ENCODE measurements at regions of chr9 and their contacts with region 1.

Region 1: GRCh38 chr9:19925817-19926503 is 137.1 kb upstream of the SLC24A2 start:
- DNase-seq: peak; percentile 69
- H3K4me3 ChIP-seq: peak overlapping the region in 3 of 4 donors; percentile 10 to 42 (median 29)
- H3K27ac ChIP-seq: no peak overlapping the region
- H3K4me1 ChIP-seq: peaks cover 0 to 10% (median 3%) of the 10 kb centered on the region in 4 donors
- H3K27me3 ChIP-seq: peaks cover 6% of the 10 kb centered on the region
- CTCF ChIP-seq: peak; percentile 94 to 98 (median 95)
- EP300 ChIP-seq: no peak
- POLR2A ChIP-seq: no peak

Region 2: GRCh38 chr9:19720377-19720776 is 205.6 kb before region 1 on chr9:
- in situ Hi-C with region 1: no loop called
- intact Hi-C with region 1: no loop called
- DNase-seq: no peak
- H3K4me3 ChIP-seq: no peak overlapping the region
- H3K27ac ChIP-seq: no peak overlapping the region
- H3K4me1 ChIP-seq: no peaks in the 10 kb centered on the region
- H3K27me3 ChIP-seq: no peaks in the 10 kb centered on the region
- CTCF ChIP-seq: no peak
- EP300 ChIP-seq: no peak
- POLR2A ChIP-seq: no peak

Region 3: DNA sequence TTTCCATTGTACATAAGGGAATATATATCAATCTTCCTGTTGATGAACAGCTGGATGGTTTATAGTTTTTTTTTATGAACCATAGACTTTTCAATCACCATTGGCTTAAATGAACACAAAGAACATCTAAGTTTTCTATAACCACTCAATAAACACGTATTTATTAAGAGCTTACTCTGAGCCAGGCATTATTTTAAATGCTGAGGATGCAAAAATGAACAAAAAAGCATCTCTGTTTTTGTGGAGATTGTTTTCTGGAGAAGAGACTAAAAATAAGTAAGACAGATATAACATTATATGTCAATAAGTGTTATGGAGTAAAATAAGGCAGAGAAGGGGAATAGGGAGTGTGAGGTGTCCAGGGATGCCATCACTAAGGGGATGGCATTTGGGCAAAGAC is 85.0 kb before region 1 on chr9:
- in situ Hi-C with region 1: no loop called
- intact Hi-C with region 1: no loop called
- DNase-seq: no peak
- H3K4me3 ChIP-seq: no peak overlapping the region
- H3K27ac ChIP-seq: no peak overlapping the region
- H3K4me1 ChIP-seq: no peaks in the 10 kb centered on the region
- H3K27me3 ChIP-seq: no peaks in the 10 kb centered on the region
- CTCF ChIP-seq: no peak
- EP300 ChIP-seq: no peak
- POLR2A ChIP-seq: no peak

Region 4: GRCh38 chr9:19999491-20000057 is 73.6 kb after region 1 on chr9:
- in situ Hi-C with region 1: loop called in 1 of 4 experiments (anchors 25 kb)
- intact Hi-C with region 1: no loop called
- DNase-seq: no peak
- H3K4me3 ChIP-seq: no peak overlapping the region
- H3K27ac ChIP-seq: no peak overlapping the region
- H3K4me1 ChIP-seq: no peaks in the 10 kb centered on the region
- H3K27me3 ChIP-seq: no peaks in the 10 kb centered on the region
- CTCF ChIP-seq: no peak
- EP300 ChIP-seq: no peak
- POLR2A ChIP-seq: no peak

Region 5: DNA sequence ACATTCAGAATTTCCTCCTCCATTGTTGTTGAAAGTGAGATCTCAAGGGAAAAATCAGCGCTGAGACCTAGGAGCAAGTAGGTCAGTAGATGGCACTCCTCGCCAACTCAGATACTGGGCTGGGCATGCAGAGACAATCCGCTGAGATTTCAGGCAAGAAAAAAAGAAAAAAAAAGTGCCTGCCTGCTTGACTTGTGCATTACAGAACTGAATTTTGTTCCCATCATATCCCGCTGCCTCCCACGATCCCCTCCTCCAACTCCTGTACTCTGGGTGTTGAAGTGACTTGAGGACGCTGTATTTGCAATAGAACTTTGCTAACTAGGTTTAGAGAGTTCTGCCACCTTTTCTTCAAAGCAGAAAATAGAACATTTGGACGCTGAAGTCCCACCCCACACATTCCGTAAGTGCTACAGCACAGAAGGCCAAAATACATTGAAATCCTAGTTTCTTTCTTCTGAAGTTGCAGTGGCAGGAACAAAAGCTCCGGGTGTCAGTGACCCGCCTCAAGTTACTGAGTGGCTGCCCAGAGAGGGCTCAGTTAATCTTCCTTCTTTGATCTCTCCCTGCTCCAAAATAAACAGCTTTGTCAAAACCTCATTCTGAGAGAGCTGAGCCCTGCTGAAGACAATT is 430.6 kb after region 1 on chr9:
- in situ Hi-C with region 1: no loop called
- intact Hi-C with region 1: no loop called
- DNase-seq: peak; percentile 74
- H3K4me3 ChIP-seq: peak overlapping the region in 1 of 4 donors; percentile 23
- H3K27ac ChIP-seq: peak overlapping the region; percentile 45 to 68 (median 64)
- H3K4me1 ChIP-seq: peaks cover 0 to 22% (median 16%) of the 10 kb centered on the region in 4 donors
- H3K27me3 ChIP-seq: no peaks in the 10 kb centered on the region
- CTCF ChIP-seq: peak; percentile 55 to 72 (median 67)
- EP300 ChIP-seq: no peak
- POLR2A ChIP-seq: no peak

Region 6: DNA sequence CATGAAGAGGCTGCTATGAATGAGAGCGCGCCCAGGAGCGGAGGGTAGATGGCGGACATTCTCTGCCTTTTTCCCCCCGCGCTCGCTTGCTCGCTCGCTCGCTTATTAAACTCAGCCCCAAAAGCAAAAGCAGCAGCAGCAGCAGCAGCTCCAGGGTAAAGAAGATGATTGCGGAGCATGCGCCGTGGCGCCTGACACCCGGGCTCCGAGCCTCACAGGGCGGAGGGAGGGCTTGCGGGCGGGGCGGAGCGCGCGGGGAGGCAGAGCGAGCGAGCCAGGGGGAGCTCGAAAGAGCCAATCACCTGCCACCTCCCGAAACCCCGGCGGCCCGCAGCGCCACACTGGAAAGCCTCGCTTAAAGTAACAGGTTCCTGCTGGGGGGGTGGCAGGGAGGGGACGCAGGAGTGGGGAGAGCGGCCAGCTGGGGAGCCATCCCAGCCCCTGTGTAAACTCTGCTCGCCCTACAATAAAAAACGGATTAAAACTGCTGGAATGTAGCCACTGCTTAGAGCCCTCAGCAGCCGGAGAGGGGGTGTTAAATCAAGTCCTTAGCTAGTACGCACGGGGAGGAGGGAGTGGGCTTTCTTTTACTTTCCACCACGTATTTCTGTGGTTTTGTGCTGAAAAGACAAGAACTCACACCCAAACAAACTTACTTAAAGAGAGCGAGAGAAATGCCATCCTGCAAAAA is 696.5 kb after region 1 on chr9 and contains the start of gene MLLT3:
- in situ Hi-C with region 1: loop called in 1 of 4 experiments (anchors 25 kb)
- intact Hi-C with region 1: loop called (anchors 10 kb)
- DNase-seq: peak; percentile 97
- H3K4me3 ChIP-seq: peak within 1 kb of the TSS; percentile 74 to 94 (median 85)
- H3K27ac ChIP-seq: peak within 1 kb of the TSS; percentile 90 to 98 (median 94)
- H3K4me1 ChIP-seq: peaks cover 9 to 42% (median 25%) of the 10 kb centered on the region in 4 donors
- H3K27me3 ChIP-seq: no peaks in the 10 kb centered on the region
- CTCF ChIP-seq: peak in 2 of 5 experiments; percentile 7 to 11
- EP300 ChIP-seq: no peak
- POLR2A ChIP-seq: peak; percentile 75
- total RNA-seq, gene MLLT3: 9.4 to 38.2 (median 30.2) TPM

Region 7: DNA sequence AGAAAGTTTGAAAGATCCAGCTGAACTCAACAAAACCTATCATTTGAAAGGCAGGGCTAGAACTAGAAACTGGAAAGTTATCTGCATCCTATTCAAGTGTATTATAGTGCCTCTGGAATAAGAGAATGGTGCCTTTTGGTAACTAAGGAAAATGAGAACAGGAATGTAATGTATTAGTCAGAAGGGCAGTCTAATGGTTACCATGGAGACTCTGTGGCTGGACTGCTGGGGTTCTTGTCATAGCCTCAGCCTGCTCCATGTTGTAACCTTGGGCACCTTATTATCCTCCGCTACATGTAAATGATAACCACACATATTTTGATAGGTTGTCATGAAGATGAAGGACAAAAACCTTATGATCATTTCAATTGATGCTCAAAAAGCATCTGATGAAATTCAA is 1176.3 kb after region 1 on chr9:
- in situ Hi-C with region 1: loop called (anchors 10 to 25 kb)
- intact Hi-C with region 1: no loop called
- DNase-seq: no peak
- H3K4me3 ChIP-seq: no peak overlapping the region
- H3K27ac ChIP-seq: no peak overlapping the region
- H3K4me1 ChIP-seq: peaks cover 0 to under 1% (median 0%) of the 10 kb centered on the region in 4 donors
- H3K27me3 ChIP-seq: no peaks in the 10 kb centered on the region
- CTCF ChIP-seq: no peak
- EP300 ChIP-seq: no peak
- POLR2A ChIP-seq: no peak

Measured in transverse colon (tissue), 4 donors.